HepG2 (cell line): ENCODE measurements at regions of chr7 and their contacts with region 1.

Region 1: DNA sequence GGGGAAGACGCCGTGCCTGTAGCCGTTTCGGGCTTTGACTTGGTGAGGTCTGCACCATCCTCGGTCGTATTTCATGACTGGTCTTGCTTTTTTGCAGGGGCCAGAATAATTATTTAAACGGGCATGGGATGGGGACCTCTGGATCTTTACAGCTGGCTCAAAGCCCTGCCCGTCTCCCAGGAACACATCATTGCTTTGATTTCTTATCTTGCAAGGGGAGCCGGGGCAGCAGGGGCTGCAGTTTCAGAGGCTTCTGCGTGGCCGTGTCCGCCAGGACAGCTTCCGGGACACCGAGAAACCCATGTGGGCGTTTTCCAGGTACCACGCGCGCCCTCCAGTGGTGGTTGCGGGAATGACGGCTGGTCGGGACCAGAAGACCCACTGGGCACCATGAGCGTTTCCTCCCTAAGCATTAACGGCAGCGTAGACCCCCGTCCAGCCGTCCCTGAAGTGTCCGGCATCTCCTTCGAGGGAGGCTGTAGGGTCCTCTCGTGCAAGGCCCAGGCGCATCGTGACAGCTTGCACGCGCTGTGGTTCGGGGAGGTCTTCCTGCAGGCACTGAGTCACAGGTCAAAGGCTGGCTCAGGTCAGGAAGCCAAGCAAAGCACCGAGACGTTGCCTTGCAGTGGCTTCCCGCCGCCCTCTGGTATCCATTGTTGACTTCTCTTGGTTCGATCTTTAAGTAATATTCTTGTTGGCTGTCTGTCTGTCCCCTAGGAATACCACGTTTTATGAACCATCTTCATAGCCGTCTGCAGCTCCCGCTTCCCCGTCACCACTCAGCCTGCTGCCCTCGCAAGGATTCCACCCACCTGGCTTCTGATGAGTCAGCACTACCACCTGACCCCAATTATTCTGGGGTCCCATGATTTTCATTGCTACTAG is 16.2 kb upstream of the ZFAND2A start:
- DNase-seq: peak; percentile 70
- ATAC-seq: peak; percentile 83
- H3K4me3 ChIP-seq: peak overlapping the region; percentile 27 to 65 (median 37); a peak in 5 of 6 replicates
- H3K27ac ChIP-seq: peak overlapping the region; percentile 57
- H3K4me1 ChIP-seq: peaks cover 26% of the 10 kb centered on the region
- H3K27me3 ChIP-seq: peaks cover 3 to 9% of the 10 kb centered on the region in 2 experiments; a peak in 2 of 5 replicates
- CTCF ChIP-seq: peak; percentile 98
- EP300 ChIP-seq: no peak
- POLR2A ChIP-seq: peak in 1 of 2 experiments; percentile 53; a peak in 2 of 4 replicates
- RAD21 ChIP-seq: peak; percentile 83

Region 2: GRCh38 chr7:1103009-1103788 is 73.0 kb before region 1 on chr7:
- CTCF ChIA-PET with region 1: no interaction called
- POLR2A ChIA-PET with region 1: no interaction called
- in situ Hi-C with region 1: no loop called
- intact Hi-C with region 1: loop called (anchors 2 kb)
- DNase-seq: peak; percentile 41
- ATAC-seq: peak; percentile 22; the same call in 2 of the 3 replicates
- H3K4me3 ChIP-seq: no peak overlapping the region
- H3K27ac ChIP-seq: no peak overlapping the region
- H3K4me1 ChIP-seq: peaks cover 34% of the 10 kb centered on the region
- H3K27me3 ChIP-seq: no peaks in the 10 kb centered on the region
- CTCF ChIP-seq: no peak
- EP300 ChIP-seq: no peak
- POLR2A ChIP-seq: no peak
- RAD21 ChIP-seq: no peak

Region 3: GRCh38 chr7:1137510-1138167 is 38.6 kb before region 1 on chr7:
- CTCF ChIA-PET with region 1: interaction called, 4 read pairs
- POLR2A ChIA-PET with region 1: interaction called, 3 read pairs
- in situ Hi-C with region 1: no loop called
- intact Hi-C with region 1: loop called (anchors 5 kb)
- DNase-seq: no peak
- ATAC-seq: peak; percentile 84
- H3K4me3 ChIP-seq: peak overlapping the region; percentile 83 to 97 (median 96)
- H3K27ac ChIP-seq: peak overlapping the region; percentile 46
- H3K4me1 ChIP-seq: peaks cover 13% of the 10 kb centered on the region; the same call in 1 of the 2 replicates
- H3K27me3 ChIP-seq: no peaks in the 10 kb centered on the region
- CTCF ChIP-seq: no peak
- EP300 ChIP-seq: no peak
- POLR2A ChIP-seq: no peak
- RAD21 ChIP-seq: no peak